ENCODE measurements at regions of chr5 and their contacts with region 1.

Region 1: GRCh38 chr5:157283434-157283833 is 17.5 kb downstream of the CYFIP2 start:
- DNase-seq: peak; percentile 69
- H3K4me3 Mint-ChIP-seq: peak overlapping the region; percentile 23
- H3K27ac Mint-ChIP-seq: peak overlapping the region; percentile 68
- H3K4me1 Mint-ChIP-seq: peaks cover 89% of the 10 kb centered on the region
- H3K27me3 Mint-ChIP-seq: no peaks in the 10 kb centered on the region

Region 2: DNA sequence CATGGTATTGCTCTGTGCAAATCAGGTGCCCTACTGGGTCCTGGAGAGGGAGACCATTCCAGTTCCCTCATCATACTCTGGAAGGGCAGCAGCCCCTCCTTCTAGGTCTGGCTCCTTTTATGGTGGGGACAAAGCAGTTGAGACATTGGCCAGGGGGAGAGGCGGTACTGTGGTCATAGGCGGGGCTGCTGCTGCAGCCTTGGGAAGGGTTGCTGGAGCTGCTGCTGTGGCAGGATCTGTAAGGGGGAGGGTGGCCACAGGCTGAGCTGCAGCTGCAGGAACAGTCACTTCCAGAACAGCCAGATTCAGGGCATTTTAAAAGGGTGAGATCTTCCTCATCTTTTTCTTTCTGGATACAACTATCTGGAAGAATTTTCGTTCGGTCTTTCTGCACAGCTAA is 1189.4 kb before region 1 on chr5:
- CTCF ChIA-PET with region 1: no interaction called
- DNase-seq: no peak
- H3K4me3 Mint-ChIP-seq: no peak overlapping the region
- H3K27ac Mint-ChIP-seq: no peak overlapping the region
- H3K4me1 Mint-ChIP-seq: no peaks in the 10 kb centered on the region
- H3K27me3 Mint-ChIP-seq: no peaks in the 10 kb centered on the region

Region 3: DNA sequence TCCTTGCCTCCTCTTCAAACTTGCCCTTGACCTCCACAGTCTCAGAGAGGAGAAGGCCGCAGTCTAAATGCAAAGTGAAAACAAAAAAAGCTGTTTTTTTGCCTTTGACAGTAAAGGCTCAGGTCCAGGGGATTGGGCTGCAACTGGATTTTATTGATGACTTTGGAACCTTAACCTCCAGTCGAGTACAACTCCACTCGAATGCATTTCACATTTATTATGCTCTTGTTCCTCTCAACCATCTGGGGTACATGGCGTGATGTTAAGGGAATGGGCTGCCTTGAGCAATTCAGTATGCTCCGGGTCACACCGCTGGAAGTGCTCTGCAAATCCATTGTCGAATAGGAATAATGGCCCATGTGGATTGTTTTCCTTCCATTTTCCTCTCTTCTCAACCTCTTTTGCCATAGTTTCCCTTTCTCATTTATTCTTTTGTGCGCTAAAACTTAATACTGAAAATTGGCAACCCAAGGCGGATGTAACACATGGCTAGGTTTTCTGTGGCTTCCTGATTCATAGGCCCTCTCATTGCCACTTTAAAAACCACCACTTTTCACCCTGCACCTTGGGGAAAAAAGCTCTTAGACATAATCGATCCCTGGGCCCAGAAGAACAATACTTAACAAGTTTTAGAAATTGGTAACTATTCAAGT is 68.4 kb before region 1 on chr5:
- CTCF ChIA-PET with region 1: no interaction called
- DNase-seq: peak; percentile 49
- H3K4me3 Mint-ChIP-seq: peak overlapping the region; percentile 54
- H3K27ac Mint-ChIP-seq: peak overlapping the region; percentile 94
- H3K4me1 Mint-ChIP-seq: peaks cover 99% of the 10 kb centered on the region
- H3K27me3 Mint-ChIP-seq: no peaks in the 10 kb centered on the region

Region 4: GRCh38 chr5:157271740-157272271 is 11.6 kb before region 1 on chr5:
- CTCF ChIA-PET with region 1: interaction called, 14 read pairs
- DNase-seq: peak; percentile 95
- H3K4me3 Mint-ChIP-seq: peak overlapping the region; percentile 85
- H3K27ac Mint-ChIP-seq: peak overlapping the region; percentile 99
- H3K4me1 Mint-ChIP-seq: peaks cover 76% of the 10 kb centered on the region
- H3K27me3 Mint-ChIP-seq: no peaks in the 10 kb centered on the region

Measured in activated naive CD4-positive, alpha-beta T cell treated with anti-CD3 and anti-CD28 coated beads, Interleukin-2, amount 10 ng/mL, durations not matched to agents 7 days and 5 days (primary cell).